Psoas muscle (tissue), 8 donors: ENCODE measurements at regions of chr1 and their contacts with region 1.

Region 1: DNA sequence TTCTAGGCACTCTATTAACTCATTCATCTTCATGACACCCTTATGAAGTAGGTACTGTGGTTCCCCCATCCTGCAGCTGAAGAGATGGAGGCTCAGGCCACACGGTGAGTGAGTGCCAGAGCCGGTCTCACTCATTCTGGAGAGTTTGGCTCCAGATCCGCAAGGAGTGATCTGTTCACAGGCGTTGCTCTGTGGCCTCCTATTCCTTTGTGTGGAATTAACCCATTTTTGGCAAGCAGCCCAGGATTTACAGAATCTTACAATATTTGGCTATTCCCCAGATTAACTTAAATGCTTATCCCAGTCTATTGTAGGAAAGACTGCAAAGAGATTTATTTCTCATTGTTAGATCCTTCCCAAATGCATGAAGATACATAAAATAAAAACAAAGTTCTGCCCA is 29.6 kb downstream of the KIAA0040 start:
- DNase-seq: no peak
- ATAC-seq: no peak
- H3K4me3 ChIP-seq: no peak overlapping the region
- H3K27ac ChIP-seq: no peak overlapping the region
- H3K4me1 ChIP-seq: no peaks in the 10 kb centered on the region
- H3K27me3 ChIP-seq: no peaks in the 10 kb centered on the region
- CTCF ChIP-seq: no peak

Region 2: DNA sequence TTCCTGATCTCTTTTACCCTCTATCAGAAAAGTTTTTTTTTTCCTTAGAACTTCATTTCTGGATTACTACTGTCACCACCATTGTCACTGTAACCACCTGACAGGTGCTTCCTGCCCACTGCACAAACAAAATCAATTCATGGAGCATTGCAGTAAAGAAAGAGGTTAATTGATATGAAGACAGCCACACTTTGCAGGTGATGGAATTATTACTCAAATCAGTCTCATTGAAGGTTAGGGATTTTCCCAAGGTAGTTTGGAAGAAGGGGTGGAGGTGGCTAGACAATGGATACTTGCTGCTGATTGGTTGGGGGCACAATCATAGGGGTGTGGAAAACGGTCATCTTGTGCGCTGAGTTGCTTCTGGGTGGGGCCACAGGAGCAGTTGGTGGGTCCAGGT is 394.0 kb before region 1 on chr1:
- intact Hi-C with region 1: no loop called
- DNase-seq: no peak
- ATAC-seq: no peak
- H3K4me3 ChIP-seq: no peak overlapping the region
- H3K27ac ChIP-seq: no peak overlapping the region
- H3K4me1 ChIP-seq: no peaks in the 10 kb centered on the region
- H3K27me3 ChIP-seq: no peaks in the 10 kb centered on the region
- CTCF ChIP-seq: no peak

Region 3: DNA sequence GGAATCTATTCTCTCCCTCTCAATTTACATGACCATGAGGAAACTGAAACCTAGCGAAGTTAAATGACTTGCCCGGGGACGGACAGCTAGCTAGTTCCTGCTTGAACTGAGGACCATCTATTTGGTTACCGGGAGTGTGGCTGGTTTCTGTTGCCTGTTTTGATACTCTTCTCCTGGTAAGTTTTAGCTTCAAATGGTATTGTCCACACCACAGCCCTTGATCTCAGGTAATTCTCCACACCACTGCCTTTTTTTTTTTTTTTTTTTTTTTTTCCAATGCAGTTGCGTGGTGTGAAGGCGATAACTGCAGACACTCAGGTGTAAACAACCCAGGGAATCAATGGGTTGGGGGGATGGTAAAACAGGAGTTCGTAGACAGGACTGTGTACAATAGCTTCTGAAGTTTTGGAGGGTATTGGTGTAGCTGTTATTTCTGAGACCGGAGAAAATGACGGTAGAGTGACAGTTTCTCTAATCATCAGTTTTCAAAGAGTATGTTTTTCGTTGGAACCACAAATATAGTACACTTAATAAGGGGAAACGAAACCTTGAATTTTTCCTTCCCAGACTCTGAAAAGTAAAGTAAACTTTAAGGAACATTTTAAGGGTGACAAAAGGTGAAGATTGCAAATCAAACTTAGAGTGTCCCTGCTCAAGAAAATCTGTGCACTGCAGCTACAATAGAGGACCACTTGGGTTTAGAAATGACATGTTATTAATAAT is 288.5 kb before region 1 on chr1:
- intact Hi-C with region 1: no loop called
- DNase-seq: no peak
- ATAC-seq: no peak
- H3K4me3 ChIP-seq: peak overlapping the region; percentile 44
- H3K27ac ChIP-seq: no peak overlapping the region
- H3K4me1 ChIP-seq: no peaks in the 10 kb centered on the region
- H3K27me3 ChIP-seq: no peaks in the 10 kb centered on the region
- CTCF ChIP-seq: no peak

Region 4: GRCh38 chr1:175208773-175209492 is 46.0 kb after region 1 on chr1:
- intact Hi-C with region 1: no loop called
- DNase-seq: no peak
- ATAC-seq: peak in 2 of 4 donors; percentile 43 to 48
- H3K4me3 ChIP-seq: no peak overlapping the region
- H3K27ac ChIP-seq: no peak overlapping the region
- H3K4me1 ChIP-seq: peaks cover 4% of the 10 kb centered on the region
- H3K27me3 ChIP-seq: no peaks in the 10 kb centered on the region
- CTCF ChIP-seq: no peak

Region 5: GRCh38 chr1:175267716-175268384 is 104.9 kb after region 1 on chr1:
- intact Hi-C with region 1: no loop called
- DNase-seq: peak; percentile 56 to 82
- ATAC-seq: peak; percentile 52 to 87 (median 84)
- H3K4me3 ChIP-seq: no peak overlapping the region
- H3K27ac ChIP-seq: peak overlapping the region; percentile 3
- H3K4me1 ChIP-seq: no peaks in the 10 kb centered on the region
- H3K27me3 ChIP-seq: no peaks in the 10 kb centered on the region
- CTCF ChIP-seq: no peak

Region 6: DNA sequence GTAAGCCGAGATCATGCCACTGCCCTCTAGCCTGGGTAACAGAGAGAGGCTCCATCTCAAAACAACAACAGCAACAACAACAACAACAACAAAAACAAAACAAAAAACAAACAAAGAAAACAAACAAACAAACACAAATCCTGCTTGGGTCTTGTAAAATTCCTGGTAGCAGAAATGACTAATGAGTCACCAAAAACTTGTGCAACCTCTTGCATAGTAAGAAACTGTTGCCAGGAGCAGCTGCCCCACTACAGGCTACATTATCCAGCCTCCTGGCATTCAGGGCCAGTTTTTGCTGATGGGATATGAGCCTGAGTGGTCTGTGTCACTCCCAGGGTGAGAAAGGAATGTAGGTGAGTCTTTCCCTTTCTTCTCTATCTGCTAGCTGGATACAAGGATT is 335.0 kb after region 1 on chr1:
- intact Hi-C with region 1: loop called in 1 of 2 experiments (anchors 5 kb)
- DNase-seq: no peak
- ATAC-seq: no peak
- H3K4me3 ChIP-seq: no peak overlapping the region
- H3K27ac ChIP-seq: no peak overlapping the region
- H3K4me1 ChIP-seq: no peaks in the 10 kb centered on the region
- H3K27me3 ChIP-seq: peaks cover 0 to 20% (median 0%) of the 10 kb centered on the region in 3 donors
- CTCF ChIP-seq: no peak